ENCODE measurements at regions of chr5 and their contacts with region 1.

Region 1: DNA sequence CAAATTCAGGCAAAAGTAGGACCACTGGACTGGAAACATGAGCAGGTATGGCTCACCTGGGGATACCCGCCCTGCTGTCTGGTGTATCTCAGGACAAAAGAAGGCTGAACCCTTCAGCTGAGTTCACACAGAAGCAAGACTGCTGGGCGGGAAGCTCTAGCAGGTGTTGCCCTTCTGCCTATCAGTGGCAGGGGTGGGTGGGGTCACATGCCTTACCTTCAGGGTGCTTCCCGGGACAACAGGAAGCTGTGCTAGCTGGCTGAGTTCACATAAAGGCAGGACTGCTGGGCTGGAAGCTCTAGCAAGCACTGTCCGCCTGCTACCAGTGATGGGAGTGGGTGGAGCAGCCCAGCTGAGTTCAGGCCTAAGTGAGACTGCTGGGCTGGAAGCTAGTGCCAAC is 498.8 kb upstream of the ZNF608 start:
- DNase-seq: no peak
- ATAC-seq: no peak
- H3K4me3 ChIP-seq: no peak overlapping the region
- H3K27ac ChIP-seq: no peak overlapping the region
- H3K4me1 ChIP-seq: no peaks in the 10 kb centered on the region
- H3K27me3 ChIP-seq: no peaks in the 10 kb centered on the region
- CTCF ChIP-seq: no peak
- POLR2A ChIP-seq: no peak
- RAD21 ChIP-seq: no peak

Region 2: DNA sequence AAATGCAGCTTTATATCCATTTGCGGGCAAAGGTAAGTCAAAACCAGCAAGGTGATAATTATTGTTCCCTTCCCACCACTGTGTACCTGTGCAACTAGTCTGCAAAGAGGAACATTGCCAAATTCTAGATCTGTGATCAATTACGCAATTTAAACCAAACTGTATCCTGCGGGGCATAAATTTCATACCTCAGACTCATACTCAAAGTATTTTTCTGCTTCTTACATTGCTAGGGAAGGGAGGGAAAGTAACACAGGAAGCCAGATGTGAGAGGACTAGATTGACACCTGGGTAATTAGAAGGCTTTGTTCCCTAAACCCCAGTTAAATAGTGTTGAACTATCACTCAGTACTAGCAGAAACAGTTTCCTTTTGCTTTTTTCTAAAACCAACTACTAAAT is 258.5 kb before region 1 on chr5:
- CTCF ChIA-PET with region 1: interaction called, 10 read pairs
- POLR2A ChIA-PET with region 1: no interaction called
- dilution Hi-C with region 1: no loop called
- in situ Hi-C with region 1: no loop called
- intact Hi-C with region 1: no loop called
- DNase-seq: no peak
- ATAC-seq: no peak
- H3K4me3 ChIP-seq: no peak overlapping the region
- H3K27ac ChIP-seq: no peak overlapping the region
- H3K4me1 ChIP-seq: no peaks in the 10 kb centered on the region
- H3K27me3 ChIP-seq: no peaks in the 10 kb centered on the region
- CTCF ChIP-seq: no peak
- POLR2A ChIP-seq: no peak
- RAD21 ChIP-seq: no peak

Region 3: DNA sequence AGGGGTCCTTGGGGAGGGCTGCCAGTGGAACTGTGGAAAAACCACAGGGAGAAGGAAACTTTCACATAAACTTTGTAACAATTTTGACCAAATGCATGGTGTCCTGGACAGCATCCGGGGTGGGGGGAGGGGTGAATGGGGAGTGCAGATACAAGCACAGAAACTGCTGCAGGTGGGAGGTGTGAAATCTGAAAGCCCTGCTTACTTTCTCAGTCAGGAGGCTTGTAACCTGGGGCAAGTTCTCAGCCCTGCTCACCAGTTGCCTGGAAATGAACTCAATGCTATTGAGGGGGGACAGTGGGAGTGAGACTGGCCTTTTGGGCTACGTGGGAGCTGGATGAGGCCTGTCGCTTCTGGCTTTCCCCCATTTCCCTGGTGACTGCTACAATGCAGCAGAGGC is 195.7 kb after region 1 on chr5:
- CTCF ChIA-PET with region 1: no interaction called
- POLR2A ChIA-PET with region 1: no interaction called
- dilution Hi-C with region 1: no loop called
- in situ Hi-C with region 1: no loop called
- intact Hi-C with region 1: no loop called
- DNase-seq: no peak
- ATAC-seq: no peak
- H3K4me3 ChIP-seq: no peak overlapping the region
- H3K27ac ChIP-seq: no peak overlapping the region
- H3K4me1 ChIP-seq: no peaks in the 10 kb centered on the region
- H3K27me3 ChIP-seq: no peaks in the 10 kb centered on the region
- CTCF ChIP-seq: no peak
- POLR2A ChIP-seq: no peak
- RAD21 ChIP-seq: no peak

Measured in IMR-90 (cell line).